MCF 10A (cell line): ENCODE measurements at regions of chr5 and their contacts with region 1.

Region 1: DNA sequence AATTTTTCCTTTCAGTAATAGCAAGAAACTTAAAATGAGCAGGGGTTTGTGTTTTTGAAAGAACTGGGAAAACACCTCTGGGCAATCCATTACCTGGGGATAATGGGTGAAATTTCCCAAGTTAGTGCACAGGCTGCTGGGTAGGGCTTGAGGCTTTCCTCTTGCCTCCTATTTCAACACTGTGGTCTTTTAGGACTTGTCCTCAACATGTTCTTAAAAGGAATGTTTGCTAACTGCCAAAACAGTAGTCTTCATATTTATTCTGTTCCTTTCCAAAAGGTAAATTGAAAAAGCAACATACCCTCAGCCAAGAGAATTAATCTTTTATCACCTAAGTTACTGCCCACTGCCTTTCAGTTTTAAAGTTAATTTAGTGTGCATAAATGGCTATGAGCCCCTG is 158.3 kb upstream of the CCDC152 start:
- DNase-seq: peak; percentile 58
- H3K4me3 Mint-ChIP-seq: no peak overlapping the region
- H3K27ac Mint-ChIP-seq: peak overlapping the region; percentile 72
- H3K4me1 Mint-ChIP-seq: peaks cover 7% of the 10 kb centered on the region
- H3K27me3 Mint-ChIP-seq: no peaks in the 10 kb centered on the region
- CTCF ChIP-seq: no peak

Region 2: GRCh38 chr5:42621242-42621641 is 22.9 kb after region 1 on chr5:
- CTCF ChIA-PET with region 1: no interaction called
- POLR2A ChIA-PET with region 1: interaction called, 12 read pairs
- intact Hi-C with region 1: no loop called
- DNase-seq: no peak
- H3K4me3 Mint-ChIP-seq: no peak overlapping the region
- H3K27ac Mint-ChIP-seq: no peak overlapping the region
- H3K4me1 Mint-ChIP-seq: peaks cover 18% of the 10 kb centered on the region
- H3K27me3 Mint-ChIP-seq: no peaks in the 10 kb centered on the region
- CTCF ChIP-seq: no peak